ENCODE measurements at regions of chr6 and their contacts with region 1.

Region 1: GRCh38 chr6:7535498-7535897 is 6.0 kb upstream of the DSP start:
- DNase-seq: no peak
- CTCF ChIP-seq: no peak

Region 2: GRCh38 chr6:7546020-7546369 is 10.5 kb after region 1 on chr6:
- CTCF ChIA-PET with region 1: interaction called, 10 read pairs
- POLR2A ChIA-PET with region 1: no interaction called
- DNase-seq: no peak
- CTCF ChIP-seq: no peak